Right lobe of liver (tissue), 6 donors: ENCODE measurements at regions of chr19 and their contacts with region 1.

Region 1: GRCh38 chr19:28324275-28325060 is 888.5 kb downstream of the UQCRFS1 start:
- DNase-seq: no peak
- ATAC-seq: no peak
- H3K4me3 ChIP-seq: no peak overlapping the region
- H3K27ac ChIP-seq: no peak overlapping the region
- H3K4me1 ChIP-seq: no peaks in the 10 kb centered on the region
- H3K27me3 ChIP-seq: no peaks in the 10 kb centered on the region
- CTCF ChIP-seq: no peak
- POLR2A ChIP-seq: no peak

Region 2: DNA sequence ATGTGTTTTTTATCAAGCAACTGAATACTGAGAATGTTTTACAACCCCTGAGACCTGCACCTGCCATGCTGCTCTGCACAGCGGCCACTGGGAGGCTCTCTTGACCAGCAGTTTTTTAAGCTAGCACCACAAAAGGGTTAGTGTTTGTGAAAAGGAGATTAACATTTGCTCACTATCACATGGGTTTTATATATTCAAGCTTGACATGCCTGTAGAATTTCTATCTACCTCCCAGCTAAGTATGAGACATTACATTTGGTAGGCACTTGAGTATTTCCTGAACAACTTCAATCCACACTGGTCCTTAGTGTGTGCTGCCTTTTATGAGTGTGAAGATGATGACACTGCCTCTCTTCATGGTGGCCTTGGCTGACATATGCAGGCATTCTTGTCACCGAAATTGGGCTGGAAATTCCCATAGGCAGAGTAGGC is 350.4 kb before region 1 on chr19:
- intact Hi-C with region 1: loop called (anchors 10 kb)
- DNase-seq: peak in 1 of 3 donors; percentile 25
- ATAC-seq: peak in 2 of 4 donors; percentile 55 to 58
- H3K4me3 ChIP-seq: no peak overlapping the region
- H3K27ac ChIP-seq: no peak overlapping the region
- H3K4me1 ChIP-seq: no peaks in the 10 kb centered on the region
- H3K27me3 ChIP-seq: no peaks in the 10 kb centered on the region
- CTCF ChIP-seq: peak; percentile 24 to 53 (median 40)
- POLR2A ChIP-seq: no peak